Caco-2 (cell line): ENCODE measurements at regions of chr13 and their contacts with region 1.

Region 1: DNA sequence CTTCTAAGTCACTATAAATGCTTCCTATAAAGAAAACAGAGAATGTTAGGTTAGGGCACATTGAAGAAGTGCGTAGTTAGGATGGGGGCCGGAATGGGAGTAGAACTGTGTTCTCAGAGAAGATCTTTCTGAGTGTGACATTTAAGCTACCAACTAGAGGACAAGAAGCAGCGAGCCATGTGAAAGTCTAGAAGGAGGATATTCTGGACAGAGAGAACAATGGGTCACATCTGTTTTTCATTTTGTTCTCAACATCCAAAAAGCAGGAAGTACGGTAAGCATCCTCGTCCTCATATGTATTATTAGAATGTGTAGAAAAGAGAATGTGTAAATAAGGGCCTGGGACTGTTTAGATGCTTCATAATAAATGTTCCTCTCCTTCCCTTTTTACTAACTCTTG is 44.5 kb upstream of the PARP4 start:
- DNase-seq: no peak
- H3K4me3 ChIP-seq: no peak overlapping the region
- H3K4me3 Mint-ChIP-seq: no peak overlapping the region
- H3K27ac Mint-ChIP-seq: no peak overlapping the region
- H3K4me1 ChIP-seq: no peaks in the 10 kb centered on the region
- H3K4me1 Mint-ChIP-seq: no peaks in the 10 kb centered on the region
- H3K27me3 ChIP-seq: no peaks in the 10 kb centered on the region
- H3K27me3 Mint-ChIP-seq: peaks cover 21% of the 10 kb centered on the region
- CTCF ChIP-seq: no peak

Region 2: DNA sequence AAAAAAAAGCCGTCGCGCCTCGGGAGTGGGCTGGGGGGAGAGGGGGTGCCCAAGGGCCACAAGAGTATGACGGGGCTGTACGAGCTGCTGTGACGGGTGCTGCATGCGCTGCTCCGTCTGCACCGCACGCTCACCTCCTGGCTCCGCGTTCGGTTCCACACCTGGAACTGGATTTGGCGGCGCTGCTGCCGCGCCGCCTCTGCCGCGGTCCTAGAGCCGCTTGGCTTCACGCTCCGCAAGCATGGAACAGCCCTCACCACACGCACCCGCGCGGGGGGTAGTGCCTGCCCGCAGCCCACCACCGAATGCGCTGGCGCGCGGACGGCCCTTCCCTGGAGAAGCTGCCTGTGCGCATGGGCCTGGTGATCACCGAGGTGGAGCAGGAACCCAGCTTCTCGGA is 228.9 kb before region 1 on chr13:
- CTCF ChIA-PET with region 1: no interaction called
- POLR2A ChIA-PET with region 1: no interaction called
- intact Hi-C with region 1: loop called (anchors 10 kb)
- DNase-seq: no peak
- H3K4me3 ChIP-seq: no peak overlapping the region
- H3K4me3 Mint-ChIP-seq: no peak overlapping the region
- H3K27ac Mint-ChIP-seq: no peak overlapping the region
- H3K4me1 ChIP-seq: no peaks in the 10 kb centered on the region
- H3K4me1 Mint-ChIP-seq: no peaks in the 10 kb centered on the region
- H3K27me3 ChIP-seq: no peaks in the 10 kb centered on the region
- H3K27me3 Mint-ChIP-seq: peaks cover 4% of the 10 kb centered on the region
- CTCF ChIP-seq: no peak

Region 3: GRCh38 chr13:24627099-24627714 is 70.1 kb after region 1 on chr13:
- CTCF ChIA-PET with region 1: no interaction called
- POLR2A ChIA-PET with region 1: no interaction called
- intact Hi-C with region 1: no loop called
- DNase-seq: peak in 1 of 2 experiments; percentile 28
- H3K4me3 ChIP-seq: no peak overlapping the region
- H3K4me3 Mint-ChIP-seq: no peak overlapping the region
- H3K27ac Mint-ChIP-seq: no peak overlapping the region
- H3K4me1 ChIP-seq: no peaks in the 10 kb centered on the region
- H3K4me1 Mint-ChIP-seq: peaks cover 19% of the 10 kb centered on the region
- H3K27me3 ChIP-seq: no peaks in the 10 kb centered on the region
- H3K27me3 Mint-ChIP-seq: no peaks in the 10 kb centered on the region
- CTCF ChIP-seq: peak in 1 of 2 experiments; percentile 36